ENCODE measurements at regions of chr1 and their contacts with region 1.

Region 1: DNA sequence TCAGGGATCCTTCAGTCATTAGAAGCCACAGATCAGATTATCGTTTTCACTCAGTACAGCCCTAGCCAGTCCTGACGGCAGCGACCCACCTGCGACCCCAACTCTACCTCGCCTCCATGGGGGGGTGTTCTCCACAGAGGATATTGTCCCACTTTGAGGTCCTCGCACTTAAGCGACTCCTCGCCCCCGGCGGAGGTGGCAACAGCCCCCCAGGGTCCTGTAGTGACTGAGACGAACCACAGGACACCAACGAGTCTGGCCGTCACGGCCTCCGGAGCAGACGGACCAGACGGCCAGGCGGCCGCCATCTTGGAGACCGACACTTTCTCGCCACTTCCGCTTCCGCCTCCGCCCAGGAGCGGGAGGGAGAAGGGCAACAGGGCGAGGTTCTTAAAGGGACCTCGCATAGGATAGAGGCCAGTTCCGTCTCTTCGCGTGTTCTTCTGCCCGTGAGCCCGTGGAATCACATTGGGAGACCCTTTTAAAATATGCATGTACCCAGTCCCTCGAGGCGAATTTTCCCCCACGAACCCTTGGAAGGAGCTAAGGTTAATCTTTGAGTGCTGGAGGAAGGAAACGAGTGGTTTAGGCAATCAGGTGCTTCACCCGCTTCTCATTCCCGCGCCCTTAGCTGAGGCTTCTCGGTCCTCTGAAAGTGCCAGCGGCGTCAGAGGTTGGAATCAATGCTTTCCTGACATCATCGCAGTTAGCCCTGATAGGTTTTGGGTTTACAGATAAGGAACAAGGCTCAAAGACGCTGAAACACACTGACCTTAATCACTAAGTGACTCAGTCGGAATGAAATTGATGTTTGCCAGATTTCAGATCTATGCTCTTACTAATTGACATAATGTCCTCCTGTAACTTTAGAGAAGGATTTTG is at the start of gene TM2D1:
- DNase-seq: peak; percentile 91
- ATAC-seq: peak; percentile 98
- H3K4me3 ChIP-seq: peak within 1 kb of the TSS; percentile 76 to 99 (median 97)
- H3K4me3 Mint-ChIP-seq: peak within 1 kb of the TSS; percentile 96
- H3K27ac ChIP-seq: peak within 1 kb of the TSS; percentile 86 to 93
- H3K27ac Mint-ChIP-seq: peak within 1 kb of the TSS; percentile 96
- H3K4me1 ChIP-seq: peaks cover 9 to 13% of the 10 kb centered on the region in 2 donors
- H3K4me1 Mint-ChIP-seq: peaks cover 24% of the 10 kb centered on the region
- H3K27me3 ChIP-seq: peaks cover 0 to 2% (median 0%) of the 10 kb centered on the region in 4 experiments
- H3K27me3 Mint-ChIP-seq: no peaks in the 10 kb centered on the region
- CTCF ChIP-seq: no peak
- total RNA-seq, gene TM2D1: 53.3 and 58.5 TPM in 2 replicates

Region 2: DNA sequence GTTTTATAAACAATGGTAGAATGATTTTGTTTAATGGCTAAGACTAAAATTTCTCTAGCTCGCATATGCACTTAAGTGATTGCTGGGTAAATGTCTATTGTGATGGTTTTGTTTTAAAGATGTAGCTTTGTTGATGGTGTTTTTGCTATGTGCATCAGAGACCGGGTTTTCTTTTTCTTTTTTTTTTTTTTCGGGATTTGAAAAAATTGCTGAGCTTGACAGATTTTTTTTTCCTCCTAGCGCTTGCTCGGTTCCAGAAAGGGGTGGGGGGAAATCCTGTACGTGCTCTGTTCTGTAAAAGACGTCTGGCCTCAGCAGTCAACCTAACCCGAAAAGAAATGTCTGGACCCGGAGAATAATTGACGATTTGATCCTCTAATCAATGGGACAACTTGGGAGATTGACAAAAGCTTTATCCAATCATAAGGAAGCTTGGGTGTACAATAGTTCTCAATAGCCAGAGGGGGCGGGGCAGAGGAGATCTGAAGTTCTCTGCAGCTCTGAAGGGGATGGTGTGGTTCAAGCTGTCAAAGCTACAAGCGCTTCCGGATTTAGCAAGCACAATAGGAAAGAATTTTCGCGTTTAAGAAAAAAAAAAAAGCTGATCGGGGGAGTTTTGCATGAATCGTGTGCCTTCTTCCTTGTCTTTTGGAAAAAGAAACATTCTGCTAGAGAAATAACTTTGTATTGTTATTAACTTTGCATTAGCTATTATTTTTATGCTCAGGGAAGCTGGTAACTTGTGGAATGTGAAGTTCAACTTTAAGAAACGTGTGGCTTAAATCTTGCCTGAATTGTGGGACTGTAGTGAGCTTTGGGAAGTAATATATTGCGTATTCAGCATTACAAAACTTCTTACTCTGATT is 647.1 kb before region 1 on chr1:
- CTCF ChIA-PET with region 1: no interaction called
- POLR2A ChIA-PET with region 1: no interaction called
- intact Hi-C with region 1: loop called (anchors 5 kb)
- DNase-seq: peak; percentile 91
- ATAC-seq: peak; percentile 42
- H3K4me3 ChIP-seq: peak overlapping the region; percentile 54 to 98 (median 67)
- H3K4me3 Mint-ChIP-seq: peak overlapping the region; percentile 92
- H3K27ac ChIP-seq: peak overlapping the region; percentile 71 to 83
- H3K27ac Mint-ChIP-seq: peak overlapping the region; percentile 75
- H3K4me1 ChIP-seq: peaks cover 33% of the 10 kb centered on the region in 2 donors
- H3K4me1 Mint-ChIP-seq: peaks cover 36% of the 10 kb centered on the region
- H3K27me3 ChIP-seq: peaks cover 0 to 40% (median 33%) of the 10 kb centered on the region in 4 experiments
- H3K27me3 Mint-ChIP-seq: peaks cover 35% of the 10 kb centered on the region
- CTCF ChIP-seq: no peak

Region 3: DNA sequence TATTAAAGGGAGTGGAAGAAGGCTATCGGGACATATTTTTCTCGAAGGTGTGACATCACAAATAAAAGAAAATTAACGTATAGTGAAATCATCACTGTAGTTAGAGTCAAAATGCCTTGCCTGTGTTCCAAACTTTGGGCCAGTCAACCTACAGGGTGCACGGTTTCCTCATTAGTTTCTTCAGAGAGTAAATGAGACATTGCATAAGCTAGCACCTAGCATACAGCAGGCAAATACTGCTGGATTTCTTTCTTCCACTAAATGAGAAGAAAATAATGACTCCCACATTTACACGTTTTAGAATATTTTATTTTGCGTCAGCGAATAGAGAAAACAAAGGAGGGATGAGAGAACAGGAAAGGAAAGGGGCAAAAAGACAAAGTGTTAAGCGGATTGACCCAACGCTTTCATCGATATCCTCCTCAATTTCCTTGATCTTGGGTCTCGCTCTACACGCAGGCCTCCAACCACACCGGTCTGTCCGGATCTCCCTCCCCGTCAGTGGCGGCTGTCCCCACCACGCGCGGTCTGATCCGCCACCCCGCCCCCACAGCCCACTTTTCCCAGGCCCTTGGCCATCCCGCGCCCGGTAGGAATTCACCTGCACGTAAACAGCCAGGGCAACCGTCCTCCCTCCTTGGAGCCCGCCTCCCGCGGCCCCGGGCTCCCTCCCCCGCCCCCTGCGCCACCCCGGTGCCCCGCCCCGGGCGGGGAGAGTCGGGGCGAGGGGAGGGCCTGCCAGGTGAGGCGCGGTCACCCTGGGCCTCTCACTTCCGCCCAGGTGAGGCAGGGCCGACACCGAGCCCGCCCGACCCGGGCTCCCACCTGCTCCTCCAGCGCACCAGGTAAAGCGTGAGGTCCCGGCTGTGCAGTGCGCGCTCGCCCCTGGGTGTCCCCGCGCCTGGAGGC is 16.9 kb after region 1 on chr1 and contains the start of gene PATJ:
- CTCF ChIA-PET with region 1: no interaction called
- POLR2A ChIA-PET with region 1: interaction called, 3 read pairs
- intact Hi-C with region 1: loop called (anchors 1 kb)
- DNase-seq: peak; percentile 68
- ATAC-seq: peak; percentile 82
- H3K4me3 ChIP-seq: peak within 1 kb of the TSS; percentile 54 to 78 (median 75)
- H3K4me3 Mint-ChIP-seq: peak within 1 kb of the TSS; percentile 97
- H3K27ac ChIP-seq: peak within 1 kb of the TSS; percentile 50 to 55
- H3K27ac Mint-ChIP-seq: peak within 1 kb of the TSS; percentile 93
- H3K4me1 ChIP-seq: peaks cover 9 to 13% of the 10 kb centered on the region in 2 donors
- H3K4me1 Mint-ChIP-seq: peaks cover 13% of the 10 kb centered on the region
- H3K27me3 ChIP-seq: no peaks in the 10 kb centered on the region
- H3K27me3 Mint-ChIP-seq: no peaks in the 10 kb centered on the region
- CTCF ChIP-seq: no peak
- total RNA-seq, gene PATJ: 43.3 and 45.3 TPM in 2 replicates